ENCODE measurements at regions of chr14 and their contacts with region 1.

Region 1: GRCh38 chr14:75307700-75308379 is 29.2 kb downstream of the FOS start:
- DNase-seq: no peak
- H3K4me3 ChIP-seq: no peak overlapping the region
- H3K27ac ChIP-seq: no peak overlapping the region
- H3K4me1 ChIP-seq: peaks cover 21% of the 10 kb centered on the region
- H3K27me3 ChIP-seq: no peaks in the 10 kb centered on the region
- CTCF ChIP-seq: peak; percentile 89 to 95 (median 90)
- POLR2A ChIP-seq: no peak

Region 2: DNA sequence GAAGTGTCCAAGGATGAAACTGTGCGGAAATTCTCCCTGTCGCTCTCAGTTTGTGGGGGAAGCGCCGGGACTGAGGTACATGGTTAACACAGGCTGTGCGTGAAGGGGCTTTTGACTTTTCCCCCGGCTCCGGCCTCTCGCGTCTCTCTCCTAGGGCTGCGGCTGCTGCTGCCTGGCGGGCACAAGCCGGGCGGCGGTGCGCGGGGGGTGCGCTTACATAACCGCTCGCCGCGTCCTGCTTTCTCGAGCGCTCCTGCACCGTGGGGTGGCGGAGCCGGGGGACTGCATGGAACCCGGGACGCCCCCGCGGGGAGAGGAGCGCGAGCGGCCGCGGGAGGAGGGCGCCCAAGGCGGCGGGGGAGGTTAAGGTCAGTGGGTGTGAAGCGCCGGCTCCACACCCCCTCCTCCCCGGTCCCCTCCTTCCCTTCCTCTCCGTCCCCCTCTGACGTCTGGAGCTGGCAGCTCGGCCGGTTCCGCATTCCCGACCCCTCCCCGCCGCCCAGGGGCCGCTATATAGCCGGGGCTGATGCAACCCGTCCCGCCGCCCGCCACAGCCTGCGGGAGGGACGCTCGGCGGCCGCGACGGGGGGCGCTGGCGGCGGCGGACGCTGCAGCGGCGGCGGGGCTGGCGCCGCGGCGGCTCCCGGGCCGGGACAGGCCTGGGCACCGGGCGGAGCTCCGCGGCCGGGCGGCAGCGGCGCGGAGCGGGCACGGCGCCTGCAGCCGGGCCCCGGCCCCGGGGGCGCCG is 119.8 kb after region 1 on chr14 and contains the start of gene JDP2:
- intact Hi-C with region 1: loop called (anchors 10 kb)
- DNase-seq: no peak
- H3K4me3 ChIP-seq: peak within 1 kb of the TSS; percentile 74 to 83
- H3K27ac ChIP-seq: peak within 1 kb of the TSS; percentile 89
- H3K4me1 ChIP-seq: peaks cover 40% of the 10 kb centered on the region
- H3K27me3 ChIP-seq: no peaks in the 10 kb centered on the region
- CTCF ChIP-seq: peak in 1 of 3 experiments; percentile 20
- POLR2A ChIP-seq: peak in 1 of 2 donors; percentile 76
- total RNA-seq, gene JDP2: 66.5 TPM

Region 3: DNA sequence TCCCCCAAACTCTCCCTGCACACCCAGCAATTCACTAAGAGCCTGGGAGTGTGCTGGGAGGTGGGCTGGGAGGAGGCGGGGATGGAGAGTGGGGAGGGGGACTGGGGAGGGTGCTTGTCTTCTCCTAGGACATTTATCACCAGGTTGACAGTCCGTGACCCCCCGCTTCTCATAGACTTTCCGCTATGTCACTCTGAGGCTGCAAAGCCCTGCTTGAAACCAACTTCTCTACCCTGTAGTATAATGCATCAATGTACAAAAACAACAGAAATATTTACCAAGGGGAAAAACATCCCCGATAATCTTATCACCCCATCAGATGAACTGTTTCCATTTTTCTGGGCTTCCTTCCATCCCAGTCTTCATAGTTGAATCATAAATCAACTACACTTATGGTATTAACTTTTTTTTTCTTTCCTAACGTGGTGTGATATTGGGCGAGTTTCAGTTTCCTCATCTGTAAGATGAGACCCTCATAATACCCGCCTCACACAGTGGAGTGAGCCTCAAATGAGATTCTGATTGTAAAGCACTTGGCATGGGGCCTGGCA is 185.8 kb after region 1 on chr14:
- intact Hi-C with region 1: loop called (anchors 5 kb)
- DNase-seq: no peak
- H3K4me3 ChIP-seq: no peak overlapping the region
- H3K27ac ChIP-seq: no peak overlapping the region
- H3K4me1 ChIP-seq: no peaks in the 10 kb centered on the region
- H3K27me3 ChIP-seq: no peaks in the 10 kb centered on the region
- CTCF ChIP-seq: no peak
- POLR2A ChIP-seq: no peak